ENCODE measurements at regions of chr11 and their contacts with region 1.

Region 1: GRCh38 chr11:32792948-32793475 is 1.4 kb downstream of the CCDC73 start:
- DNase-seq: peak; percentile 57
- H3K4me3 ChIP-seq: peak overlapping the region in 1 of 3 experiments; percentile 5
- H3K27ac ChIP-seq: no peak overlapping the region
- H3K4me1 ChIP-seq: no peaks in the 10 kb centered on the region
- H3K27me3 ChIP-seq: peaks cover 5 to 24% of the 10 kb centered on the region in 2 experiments
- CTCF ChIP-seq: peak; percentile 53 to 59
- POLR2A ChIP-seq: no peak

Region 2: DNA sequence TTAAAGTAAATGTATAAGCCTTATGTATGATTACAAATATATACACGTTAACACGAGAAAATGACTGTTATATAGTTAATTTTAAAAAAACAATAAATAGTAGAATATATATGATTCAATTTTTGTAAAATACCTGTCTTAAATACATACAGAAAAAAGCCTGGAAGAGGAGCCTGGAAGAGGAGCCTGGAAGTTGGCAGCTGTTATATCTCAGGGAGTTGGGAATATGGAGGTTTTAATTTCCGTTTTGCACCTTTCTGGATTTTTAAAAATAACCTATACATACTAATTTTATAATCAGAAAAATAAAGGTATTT is 469.2 kb before region 1 on chr11:
- CTCF ChIA-PET with region 1: interaction called, 37 read pairs
- POLR2A ChIA-PET with region 1: no interaction called
- dilution Hi-C with region 1: no loop called
- intact Hi-C with region 1: loop called (anchors 1 kb)
- DNase-seq: no peak
- H3K4me3 ChIP-seq: no peak overlapping the region
- H3K27ac ChIP-seq: no peak overlapping the region
- H3K4me1 ChIP-seq: no peaks in the 10 kb centered on the region
- H3K27me3 ChIP-seq: peaks cover 0 to 5% of the 10 kb centered on the region in 2 experiments
- CTCF ChIP-seq: no peak
- POLR2A ChIP-seq: no peak

Region 3: GRCh38 chr11:32374261-32374711 is 418.7 kb before region 1 on chr11:
- CTCF ChIA-PET with region 1: interaction called, 10 read pairs
- POLR2A ChIA-PET with region 1: no interaction called
- dilution Hi-C with region 1: no loop called
- intact Hi-C with region 1: loop called (anchors 1 kb)
- DNase-seq: peak; percentile 35
- H3K4me3 ChIP-seq: no peak overlapping the region
- H3K27ac ChIP-seq: no peak overlapping the region
- H3K4me1 ChIP-seq: no peaks in the 10 kb centered on the region
- H3K27me3 ChIP-seq: no peaks in the 10 kb centered on the region
- CTCF ChIP-seq: peak; percentile 62 to 63
- POLR2A ChIP-seq: no peak

Region 4: DNA sequence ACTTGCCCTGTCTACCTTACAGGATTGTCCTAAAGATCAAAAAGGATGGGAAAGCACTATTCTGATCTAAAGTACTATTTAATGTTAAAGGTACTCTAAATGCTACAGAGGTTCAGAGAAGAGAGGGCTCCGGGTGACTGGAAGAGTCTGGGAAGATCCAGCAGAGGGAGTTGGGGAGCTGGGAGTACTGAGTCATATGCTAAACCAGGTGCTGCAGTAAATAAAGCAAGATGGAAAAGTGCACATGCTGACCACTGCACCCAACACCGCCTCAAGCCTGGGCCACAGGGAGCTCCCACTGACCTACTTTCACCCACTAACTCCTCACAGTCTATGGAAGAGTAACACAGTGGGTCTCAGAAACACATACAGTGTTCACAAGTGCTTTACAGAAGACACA is 407.0 kb before region 1 on chr11:
- CTCF ChIA-PET with region 1: interaction called, 5 read pairs
- POLR2A ChIA-PET with region 1: no interaction called
- dilution Hi-C with region 1: no loop called
- intact Hi-C with region 1: loop called (anchors 1 kb)
- DNase-seq: peak; percentile 14
- H3K4me3 ChIP-seq: no peak overlapping the region
- H3K27ac ChIP-seq: no peak overlapping the region
- H3K4me1 ChIP-seq: no peaks in the 10 kb centered on the region
- H3K27me3 ChIP-seq: no peaks in the 10 kb centered on the region
- CTCF ChIP-seq: peak; percentile 21 to 38
- POLR2A ChIP-seq: no peak

Region 5: GRCh38 chr11:32583459-32584271 is 209.3 kb before region 1 on chr11 and contains the start of gene EIF3M:
- CTCF ChIA-PET with region 1: no interaction called
- POLR2A ChIA-PET with region 1: no interaction called
- dilution Hi-C with region 1: no loop called
- intact Hi-C with region 1: loop called (anchors 5 kb)
- DNase-seq: peak; percentile 96
- H3K4me3 ChIP-seq: peak within 1 kb of the TSS; percentile 85 to 98 (median 91)
- H3K27ac ChIP-seq: peak within 1 kb of the TSS; percentile 59
- H3K4me1 ChIP-seq: peaks cover 20% of the 10 kb centered on the region
- H3K27me3 ChIP-seq: no peaks in the 10 kb centered on the region
- CTCF ChIP-seq: no peak
- POLR2A ChIP-seq: peak; percentile 80
- total RNA-seq, gene EIF3M: 240 and 243 TPM in 2 replicates

Region 6: DNA sequence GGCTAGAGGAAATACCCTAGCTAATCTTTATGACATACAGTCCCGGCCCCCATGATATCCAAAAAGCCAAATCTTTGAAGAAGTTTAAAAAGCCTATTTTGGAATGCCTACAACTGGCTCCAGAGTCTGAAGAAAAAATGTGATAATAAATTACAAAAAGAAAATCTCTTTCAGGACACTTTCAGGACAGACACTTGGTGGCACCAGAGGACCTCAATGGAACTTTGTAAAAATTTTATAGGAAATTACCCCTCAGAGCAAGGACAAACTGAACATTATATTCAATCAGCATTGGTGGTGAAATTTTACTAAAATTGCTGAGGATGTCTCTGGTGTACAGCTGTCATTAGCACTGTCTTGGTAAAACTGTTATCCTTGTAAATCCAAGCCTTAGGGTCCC is 79.5 kb before region 1 on chr11:
- CTCF ChIA-PET with region 1: interaction called, 5 read pairs
- POLR2A ChIA-PET with region 1: no interaction called
- dilution Hi-C with region 1: no loop called
- intact Hi-C with region 1: loop called (anchors 1 kb)
- DNase-seq: no peak
- H3K4me3 ChIP-seq: no peak overlapping the region
- H3K27ac ChIP-seq: no peak overlapping the region
- H3K4me1 ChIP-seq: no peaks in the 10 kb centered on the region
- H3K27me3 ChIP-seq: peaks cover 0 to 10% of the 10 kb centered on the region in 2 experiments
- CTCF ChIP-seq: no peak
- POLR2A ChIP-seq: no peak

Region 7: DNA sequence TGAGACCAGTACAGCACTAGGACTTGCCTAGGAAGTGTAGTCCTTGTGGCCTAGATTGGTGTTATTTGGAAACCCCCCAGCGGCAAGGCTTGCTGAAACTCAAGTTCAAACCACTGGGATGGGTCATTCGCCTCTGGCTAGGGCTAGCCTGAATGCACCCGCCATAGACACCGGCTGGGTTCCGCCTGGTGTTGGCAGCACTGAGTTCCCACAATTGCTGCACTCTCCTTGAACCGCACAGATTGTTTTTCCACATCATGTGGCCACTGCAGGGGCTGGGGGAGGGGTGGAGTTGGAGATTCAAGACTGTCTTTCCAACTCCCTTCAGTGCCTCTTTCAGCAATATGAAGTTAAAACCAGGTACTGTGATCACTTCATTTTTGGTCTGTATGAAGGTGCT is 41.6 kb before region 1 on chr11:
- CTCF ChIA-PET with region 1: interaction called, 3 read pairs
- POLR2A ChIA-PET with region 1: no interaction called
- dilution Hi-C with region 1: no loop called
- intact Hi-C with region 1: loop called (anchors 2 kb)
- DNase-seq: no peak
- H3K4me3 ChIP-seq: no peak overlapping the region
- H3K27ac ChIP-seq: no peak overlapping the region
- H3K4me1 ChIP-seq: no peaks in the 10 kb centered on the region
- H3K27me3 ChIP-seq: no peaks in the 10 kb centered on the region
- CTCF ChIP-seq: no peak
- POLR2A ChIP-seq: no peak

Region 8: GRCh38 chr11:33086017-33086416 is 293.0 kb after region 1 on chr11:
- CTCF ChIA-PET with region 1: no interaction called
- POLR2A ChIA-PET with region 1: no interaction called
- dilution Hi-C with region 1: no loop called
- intact Hi-C with region 1: no loop called
- DNase-seq: no peak
- H3K4me3 ChIP-seq: no peak overlapping the region
- H3K27ac ChIP-seq: no peak overlapping the region
- H3K4me1 ChIP-seq: no peaks in the 10 kb centered on the region
- H3K27me3 ChIP-seq: no peaks in the 10 kb centered on the region
- CTCF ChIP-seq: no peak
- POLR2A ChIP-seq: no peak

Measured in endothelial cell of umbilical vein (primary cell).